ENCODE measurements at regions of chr1 and their contacts with region 1.

Region 1: GRCh38 chr1:200620273-200621131 is at the start of gene KIF14:
- DNase-seq: peak; percentile 78 to 95 (median 88)
- ATAC-seq: peak; percentile 95
- H3K4me3 ChIP-seq: peak within 1 kb of the TSS; percentile 83
- H3K4me3 Mint-ChIP-seq: peak within 1 kb of the TSS; percentile 98
- H3K27ac ChIP-seq: peak within 1 kb of the TSS; percentile 23 to 52
- H3K27ac Mint-ChIP-seq: peak within 1 kb of the TSS; percentile 90
- H3K4me1 ChIP-seq: peaks cover 19% of the 10 kb centered on the region
- H3K4me1 Mint-ChIP-seq: peaks cover 31% of the 10 kb centered on the region
- H3K27me3 ChIP-seq: no peaks in the 10 kb centered on the region
- H3K27me3 Mint-ChIP-seq: no peaks in the 10 kb centered on the region
- CTCF ChIP-seq: no peak
- total RNA-seq, gene KIF14: 0.11 TPM

Region 2: GRCh38 chr1:200738740-200739498 is 118.4 kb after region 1 on chr1 and contains the start of gene CAMSAP2:
- CTCF ChIA-PET with region 1: interaction called, 5 read pairs
- POLR2A ChIA-PET with region 1: no interaction called
- intact Hi-C with region 1: loop called (anchors 2 kb)
- DNase-seq: peak; percentile 30 to 90 (median 60)
- ATAC-seq: peak; percentile 67
- H3K4me3 ChIP-seq: peak within 1 kb of the TSS; percentile 93
- H3K4me3 Mint-ChIP-seq: peak within 1 kb of the TSS; percentile 100
- H3K27ac ChIP-seq: peak within 1 kb of the TSS; percentile 29 to 36
- H3K27ac Mint-ChIP-seq: peak within 1 kb of the TSS; percentile 90
- H3K4me1 ChIP-seq: peaks cover 17% of the 10 kb centered on the region
- H3K4me1 Mint-ChIP-seq: peaks cover 46% of the 10 kb centered on the region
- H3K27me3 ChIP-seq: no peaks in the 10 kb centered on the region
- H3K27me3 Mint-ChIP-seq: no peaks in the 10 kb centered on the region
- CTCF ChIP-seq: no peak
- total RNA-seq, gene CAMSAP2: 4.4 to 5.7 TPM